Common myeloid progenitor, CD34-positive (primary cell): ENCODE measurements at regions of chr12 and their contacts with region 1.

Region 1: GRCh38 chr12:100234598-100235304 is 32.1 kb downstream of the DEPDC4 start:
- DNase-seq: peak; percentile 41 to 62 (median 58)
- H3K4me3 ChIP-seq: no peak overlapping the region
- H3K27ac ChIP-seq: no peak overlapping the region
- H3K4me1 ChIP-seq: no peaks in the 10 kb centered on the region
- H3K27me3 ChIP-seq: no peaks in the 10 kb centered on the region

Region 2: DNA sequence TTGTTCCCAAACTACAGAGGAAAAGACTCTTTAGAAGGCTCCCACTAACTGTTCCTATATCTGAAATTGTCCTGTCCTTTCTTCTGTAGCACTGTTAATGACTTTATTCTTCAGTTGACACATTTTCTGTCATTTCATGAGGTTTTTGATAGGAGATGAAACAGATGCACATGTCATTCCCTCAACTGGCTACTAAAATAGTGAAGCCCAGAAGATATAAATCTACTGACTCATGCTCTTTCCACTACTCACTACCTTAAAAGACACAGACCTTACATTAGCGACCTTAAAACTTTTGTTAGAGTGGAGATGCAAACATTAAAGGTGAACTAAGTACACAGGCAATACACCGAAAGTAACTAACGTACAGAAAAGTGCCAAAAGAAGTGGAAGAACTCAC is 190.5 kb before region 1 on chr12:
- CTCF ChIA-PET with region 1: no interaction called
- POLR2A ChIA-PET with region 1: no interaction called
- DNase-seq: peak in 1 of 3 donors; percentile 16
- H3K4me3 ChIP-seq: no peak overlapping the region
- H3K27ac ChIP-seq: no peak overlapping the region
- H3K4me1 ChIP-seq: no peaks in the 10 kb centered on the region
- H3K27me3 ChIP-seq: no peaks in the 10 kb centered on the region

Region 3: DNA sequence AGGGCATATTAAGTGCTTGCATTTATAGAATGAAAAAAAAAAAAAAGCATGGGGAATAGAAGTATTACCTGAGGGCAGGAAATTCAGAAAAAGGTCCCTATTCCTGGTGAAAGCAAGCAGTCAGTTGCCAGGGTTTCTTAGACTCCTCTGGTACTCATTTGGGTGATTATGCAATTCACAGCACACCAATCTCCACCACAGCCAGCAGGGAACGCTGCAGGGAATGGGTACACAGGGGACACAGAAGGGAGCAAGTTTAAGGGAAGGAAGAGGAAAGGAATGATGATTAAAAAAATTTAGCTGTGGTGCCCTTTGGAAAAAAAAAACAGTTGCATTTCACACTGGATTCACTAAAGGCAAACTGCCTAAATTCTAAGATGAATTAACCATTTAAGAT is 106.2 kb before region 1 on chr12:
- CTCF ChIA-PET with region 1: no interaction called
- POLR2A ChIA-PET with region 1: no interaction called
- DNase-seq: peak; percentile 36 to 56 (median 51)
- H3K4me3 ChIP-seq: peak overlapping the region in 3 of 7 experiments; percentile 34 to 48 (median 46)
- H3K27ac ChIP-seq: peak overlapping the region in 1 of 2 experiments; percentile 59
- H3K4me1 ChIP-seq: peaks cover 13 to 31% (median 20%) of the 10 kb centered on the region in 4 experiments
- H3K27me3 ChIP-seq: no peaks in the 10 kb centered on the region

Region 4: DNA sequence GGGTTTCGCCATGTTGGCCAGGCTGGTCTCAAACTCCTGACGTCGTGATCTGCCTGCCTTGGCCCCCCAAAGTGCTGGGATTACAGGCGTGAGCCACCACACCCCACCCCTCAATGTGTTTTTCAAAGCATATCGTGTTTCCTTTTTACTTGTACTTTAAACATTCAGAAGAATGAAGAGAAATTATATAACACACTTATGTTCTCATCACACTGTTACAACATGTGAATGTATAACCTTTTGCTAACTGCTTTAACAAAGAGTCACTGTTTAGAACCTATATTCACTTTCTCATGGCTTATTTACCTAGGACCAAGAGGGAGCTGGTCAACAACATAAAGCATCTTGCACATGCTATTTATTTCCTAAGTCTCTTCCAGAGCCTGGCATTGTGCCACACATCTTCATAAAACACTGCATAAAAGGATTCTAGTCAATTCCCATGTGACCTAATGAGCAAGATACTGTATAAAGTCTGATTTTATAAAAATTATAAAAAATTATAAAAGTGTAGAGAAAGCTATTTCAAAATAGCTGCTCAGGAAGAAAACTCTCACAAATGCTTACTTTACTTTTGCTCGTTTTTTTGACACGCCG is 50.1 kb before region 1 on chr12:
- CTCF ChIA-PET with region 1: no interaction called
- POLR2A ChIA-PET with region 1: no interaction called
- DNase-seq: no peak
- H3K4me3 ChIP-seq: no peak overlapping the region
- H3K27ac ChIP-seq: no peak overlapping the region
- H3K4me1 ChIP-seq: peaks cover 0 to 6% (median under 1%) of the 10 kb centered on the region in 4 experiments
- H3K27me3 ChIP-seq: no peaks in the 10 kb centered on the region

Region 5: DNA sequence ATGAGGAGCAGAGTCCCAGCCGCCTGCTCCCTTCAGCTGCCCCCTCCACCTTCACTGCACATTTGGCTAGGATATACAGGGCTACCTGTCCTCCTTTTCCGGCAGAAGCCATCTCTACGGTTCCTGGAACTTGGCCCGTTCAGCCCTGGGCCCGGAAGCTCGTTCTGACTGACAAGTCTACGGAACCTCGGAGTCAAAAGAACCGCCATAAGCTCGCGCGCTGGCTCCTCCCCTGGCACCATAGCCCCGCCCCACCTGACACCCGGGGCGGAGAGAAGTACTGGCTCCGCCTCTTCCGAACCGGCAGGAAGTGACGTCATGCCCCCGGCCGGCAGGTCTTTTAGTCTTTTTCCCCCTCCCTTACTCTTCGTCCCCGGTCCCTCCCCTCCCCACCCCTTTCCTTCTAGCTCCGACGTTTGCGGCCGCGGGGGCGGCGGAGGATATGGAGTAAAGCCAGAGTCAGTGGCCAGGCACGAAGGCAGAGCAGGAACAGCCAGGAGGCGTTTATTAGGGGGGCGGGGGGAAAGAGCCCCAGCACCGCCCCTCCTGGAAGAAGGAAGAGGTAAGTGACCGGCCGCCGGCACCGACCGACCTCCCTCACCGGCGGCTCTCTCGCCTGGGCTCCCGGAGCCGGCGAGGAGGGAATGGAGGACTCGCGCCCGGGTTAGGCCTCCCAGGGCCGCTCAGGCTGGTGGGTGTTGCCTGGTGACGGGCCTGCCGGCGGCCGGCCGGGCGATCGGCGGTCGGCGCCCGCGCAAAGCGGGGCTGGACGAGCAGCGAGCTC is 32.3 kb after region 1 on chr12 and contains the starts of genes DEPDC4 and SCYL2:
- CTCF ChIA-PET with region 1: interaction called, 15 read pairs
- POLR2A ChIA-PET with region 1: no interaction called
- DNase-seq: peak; percentile 97 to 98 (median 98)
- H3K4me3 ChIP-seq: peak within 1 kb of the TSS; percentile 92 to 98 (median 96)
- H3K27ac ChIP-seq: peak within 1 kb of the TSS; percentile 97 to 99
- H3K4me1 ChIP-seq: peaks cover 15 to 42% (median 31%) of the 10 kb centered on the region in 4 experiments
- H3K27me3 ChIP-seq: no peaks in the 10 kb centered on the region

Region 6: DNA sequence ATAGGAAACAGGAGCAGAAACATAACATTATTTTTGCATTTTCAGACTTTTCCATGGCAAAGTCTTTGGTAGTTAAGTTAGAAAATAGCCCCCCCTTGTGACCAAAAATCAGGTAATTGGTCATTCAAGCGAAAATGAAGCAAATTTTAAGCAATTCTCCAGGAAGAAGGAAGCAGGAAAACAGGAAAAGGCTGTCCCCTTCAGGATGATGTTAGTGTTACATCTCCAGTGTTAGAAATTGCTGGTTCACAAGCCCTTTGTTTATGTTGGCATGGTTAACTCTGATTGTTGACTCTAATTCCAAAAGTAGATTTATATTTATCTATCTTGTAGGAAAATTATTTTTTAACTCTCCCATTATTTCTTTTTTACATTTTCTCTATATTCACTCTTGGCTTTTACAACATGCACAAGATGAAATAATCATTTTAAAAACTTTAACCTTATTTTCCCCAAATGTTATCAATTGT is 319.9 kb after region 1 on chr12:
- CTCF ChIA-PET with region 1: interaction called, 11 read pairs
- POLR2A ChIA-PET with region 1: no interaction called
- DNase-seq: peak; percentile 63 to 72 (median 72)
- H3K4me3 ChIP-seq: no peak overlapping the region
- H3K27ac ChIP-seq: no peak overlapping the region
- H3K4me1 ChIP-seq: no peaks in the 10 kb centered on the region
- H3K27me3 ChIP-seq: peaks cover 0 to 5% (median 0%) of the 10 kb centered on the region in 5 experiments

Region 7: DNA sequence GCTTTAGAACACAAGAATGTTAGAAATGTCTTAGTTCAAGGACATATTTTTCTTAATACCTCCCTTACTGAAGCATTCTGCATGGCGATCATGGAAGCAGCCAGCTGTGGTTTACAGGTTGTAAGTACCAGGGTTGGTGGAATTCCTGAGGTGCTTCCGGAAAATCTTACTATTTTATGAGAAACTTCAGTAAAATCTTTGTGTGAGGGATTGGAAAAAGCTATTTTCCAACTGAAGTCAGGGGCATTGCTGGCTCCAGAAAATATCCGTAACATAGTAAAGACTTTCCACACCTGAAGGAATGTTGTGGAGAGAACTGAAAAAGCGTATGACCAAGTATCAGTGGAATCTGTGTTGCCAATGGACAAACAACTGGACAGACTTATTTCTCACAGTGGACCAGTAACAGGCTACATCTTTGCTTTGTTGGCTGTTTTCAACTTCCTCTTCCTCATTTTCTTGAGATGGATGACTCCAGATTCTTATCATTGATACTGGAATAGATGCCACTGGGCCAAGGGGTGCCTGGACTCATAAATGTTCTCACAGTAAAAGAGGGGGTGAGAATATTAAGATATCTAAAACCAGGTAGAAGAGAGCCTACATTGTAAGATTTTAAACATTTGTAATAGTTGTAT is 345.0 kb after region 1 on chr12:
- CTCF ChIA-PET with region 1: no interaction called
- POLR2A ChIA-PET with region 1: no interaction called
- DNase-seq: peak in 1 of 3 donors; percentile 21
- H3K4me3 ChIP-seq: no peak overlapping the region
- H3K27ac ChIP-seq: no peak overlapping the region
- H3K4me1 ChIP-seq: peaks cover 0 to under 1% (median 0%) of the 10 kb centered on the region in 4 experiments
- H3K27me3 ChIP-seq: no peaks in the 10 kb centered on the region